HepG2 (cell line): ENCODE measurements at regions of chr5 and their contacts with region 1.

Region 1: GRCh38 chr5:139501381-139501780 is 18.8 kb upstream of the STING1 start:
- DNase-seq: no peak
- ATAC-seq: no peak
- H3K4me3 ChIP-seq: no peak overlapping the region
- H3K27ac ChIP-seq: no peak overlapping the region
- H3K4me1 ChIP-seq: peaks cover 22% of the 10 kb centered on the region
- H3K27me3 ChIP-seq: no peaks in the 10 kb centered on the region; a peak in 1 of 5 replicates
- CTCF ChIP-seq: no peak
- EP300 ChIP-seq: no peak
- POLR2A ChIP-seq: no peak
- RAD21 ChIP-seq: no peak

Region 2: GRCh38 chr5:139403787-139404483 is 97.4 kb before region 1 on chr5 and contains the start of gene SPATA24:
- CTCF ChIA-PET with region 1: no interaction called
- POLR2A ChIA-PET with region 1: interaction called, 16 read pairs
- in situ Hi-C with region 1: no loop called
- intact Hi-C with region 1: no loop called
- DNase-seq: peak; percentile 89
- ATAC-seq: peak; percentile 94
- H3K4me3 ChIP-seq: peak within 1 kb of the TSS; percentile 59 to 77 (median 60)
- H3K27ac ChIP-seq: peak within 1 kb of the TSS; percentile 78
- H3K4me1 ChIP-seq: peaks cover 52% of the 10 kb centered on the region
- H3K27me3 ChIP-seq: no peaks in the 10 kb centered on the region
- CTCF ChIP-seq: peak; percentile 18; the same call in 1 of the 2 replicates
- EP300 ChIP-seq: peak in 1 of 2 experiments; percentile 30; a peak in 1 of 4 replicates
- POLR2A ChIP-seq: peak; percentile 56 to 65
- RAD21 ChIP-seq: no peak
- total RNA-seq, gene SPATA24: 11.1 and 13.0 TPM in 2 replicates

Region 3: DNA sequence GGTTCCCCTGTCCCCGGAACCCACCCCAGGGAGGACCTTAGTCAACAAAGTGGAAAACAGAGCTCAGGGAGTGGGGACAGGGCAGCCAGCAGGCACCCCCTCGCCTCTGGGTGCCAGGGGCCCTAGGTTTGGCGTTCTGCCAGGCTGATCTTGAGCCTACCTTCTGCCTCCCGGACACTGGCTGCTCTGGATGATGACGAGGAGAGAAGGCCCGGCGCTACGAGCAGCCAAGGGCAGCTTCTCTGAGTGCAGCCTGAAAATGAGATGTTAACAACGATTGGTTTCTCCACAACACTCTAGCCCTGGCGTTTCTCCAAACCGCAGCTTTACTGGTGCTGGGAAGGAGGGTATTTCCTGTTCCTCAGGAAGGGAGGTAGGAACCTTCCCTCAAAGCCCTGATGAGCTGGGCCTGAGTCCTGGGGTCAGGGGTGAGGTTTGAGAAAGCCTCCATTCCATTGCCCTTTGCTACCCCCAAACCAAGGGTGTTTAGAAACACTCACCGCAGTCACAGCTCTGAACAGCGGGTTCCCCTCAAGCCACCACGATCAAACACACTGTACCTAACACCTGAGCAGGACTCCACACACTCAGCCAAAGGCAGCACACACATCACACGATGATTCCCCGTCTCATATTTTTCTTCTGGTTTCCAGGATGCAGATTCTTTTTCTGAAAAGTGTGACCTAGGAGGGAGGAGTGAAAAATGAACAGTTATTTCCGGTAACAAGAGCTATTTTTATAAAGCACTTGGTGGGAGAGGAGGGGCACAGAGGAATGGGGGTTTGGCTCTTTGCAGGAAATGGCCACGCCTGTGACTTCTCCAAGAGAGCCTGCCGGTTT is 19.1 kb before region 1 on chr5 and contains the start of gene STING1:
- CTCF ChIA-PET with region 1: no interaction called
- POLR2A ChIA-PET with region 1: interaction called, 24 read pairs
- in situ Hi-C with region 1: no loop called
- intact Hi-C with region 1: no loop called
- DNase-seq: peak; percentile 63
- ATAC-seq: peak; percentile 66
- H3K4me3 ChIP-seq: peak within 1 kb of the TSS; percentile 37 to 60 (median 44)
- H3K27ac ChIP-seq: no peak within 1 kb of the TSS
- H3K4me1 ChIP-seq: peaks cover 22% of the 10 kb centered on the region
- H3K27me3 ChIP-seq: peaks cover 0 to 3% of the 10 kb centered on the region in 2 experiments; a peak in 2 of 5 replicates
- CTCF ChIP-seq: no peak
- EP300 ChIP-seq: no peak
- POLR2A ChIP-seq: no peak
- RAD21 ChIP-seq: no peak
- total RNA-seq, gene STING1: 0.56 and 1.3 TPM in 2 replicates

Region 4: DNA sequence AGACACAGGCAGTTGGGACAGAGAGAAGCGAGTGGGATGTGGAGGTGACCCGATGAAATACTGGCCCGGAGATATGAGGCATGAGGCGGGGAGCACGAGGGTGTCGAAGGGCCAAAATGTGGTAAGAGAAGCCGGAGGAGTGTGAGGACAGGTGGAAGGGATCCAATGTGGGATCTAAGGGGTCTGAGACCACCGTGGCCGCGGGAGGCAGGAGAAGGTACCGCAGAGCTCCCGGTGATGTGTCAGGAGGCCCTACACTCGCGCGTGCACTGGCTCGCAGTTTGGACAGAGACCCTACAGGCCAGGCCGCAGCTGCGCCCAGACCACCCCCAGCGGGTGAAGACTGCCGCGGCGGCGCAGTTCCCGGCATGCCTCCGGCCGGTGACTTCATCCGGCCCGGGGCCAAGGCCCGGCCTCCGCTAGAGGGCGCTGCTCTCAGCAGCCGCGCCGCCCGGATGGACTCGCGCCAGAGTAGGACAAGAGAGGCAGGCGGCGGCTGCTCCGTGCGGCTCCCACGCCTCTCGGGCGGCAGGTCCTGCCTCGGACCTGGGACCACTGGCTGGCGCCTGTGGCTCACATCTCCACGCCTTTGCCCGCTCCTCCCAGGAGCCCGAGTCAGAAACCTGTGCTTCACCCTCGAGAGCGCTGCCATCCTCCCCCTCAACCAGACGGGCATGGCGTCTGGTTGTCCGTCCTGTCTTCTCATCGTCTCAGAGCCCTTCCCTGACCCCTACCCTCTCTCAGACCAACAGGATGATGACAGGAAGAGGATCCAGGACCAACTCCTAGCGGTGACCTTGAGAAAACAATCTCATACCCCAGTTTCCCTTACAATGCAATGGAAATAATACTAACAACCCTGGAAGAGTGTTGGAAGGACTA is 16.5 kb after region 1 on chr5:
- CTCF ChIA-PET with region 1: no interaction called
- POLR2A ChIA-PET with region 1: interaction called, 51 read pairs
- in situ Hi-C with region 1: no loop called
- intact Hi-C with region 1: no loop called
- DNase-seq: peak; percentile 80
- ATAC-seq: peak; percentile 91
- H3K4me3 ChIP-seq: peak overlapping the region; percentile 54 to 77 (median 59)
- H3K27ac ChIP-seq: peak overlapping the region; percentile 71
- H3K4me1 ChIP-seq: peaks cover 54% of the 10 kb centered on the region
- H3K27me3 ChIP-seq: no peaks in the 10 kb centered on the region; a peak in 1 of 5 replicates
- CTCF ChIP-seq: peak; percentile 96
- EP300 ChIP-seq: no peak
- POLR2A ChIP-seq: peak; percentile 83 to 89
- RAD21 ChIP-seq: peak; percentile 92

Region 5: GRCh38 chr5:139551191-139551889 is 50.0 kb after region 1 on chr5:
- CTCF ChIA-PET with region 1: no interaction called
- POLR2A ChIA-PET with region 1: interaction called, 12 read pairs
- in situ Hi-C with region 1: no loop called
- intact Hi-C with region 1: no loop called
- DNase-seq: no peak
- ATAC-seq: peak; percentile 33; the same call in 2 of the 3 replicates
- H3K4me3 ChIP-seq: no peak overlapping the region
- H3K27ac ChIP-seq: peak overlapping the region; percentile 1
- H3K4me1 ChIP-seq: peaks cover 36% of the 10 kb centered on the region
- H3K27me3 ChIP-seq: no peaks in the 10 kb centered on the region
- CTCF ChIP-seq: no peak
- EP300 ChIP-seq: no peak
- POLR2A ChIP-seq: no peak
- RAD21 ChIP-seq: no peak

Region 6: DNA sequence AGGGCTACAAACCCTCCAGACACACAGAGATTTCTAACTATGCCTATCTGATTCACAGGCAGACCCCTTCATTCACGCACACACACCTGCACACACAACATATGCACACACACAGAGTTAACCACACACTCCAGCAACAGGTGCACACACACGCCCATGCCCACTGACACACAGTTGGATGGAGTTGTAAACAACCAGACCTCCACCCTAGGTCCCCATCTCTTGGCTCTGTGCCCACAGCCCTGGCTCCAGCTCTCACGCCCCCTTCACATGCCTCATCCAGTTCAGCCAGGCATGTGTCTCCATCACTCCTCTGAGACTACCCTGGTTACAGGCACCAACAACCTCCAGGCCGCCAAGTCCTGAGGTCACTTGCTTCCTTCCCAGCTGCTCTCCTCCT is 355.3 kb after region 1 on chr5:
- CTCF ChIA-PET with region 1: no interaction called
- POLR2A ChIA-PET with region 1: no interaction called
- in situ Hi-C with region 1: no loop called
- intact Hi-C with region 1: no loop called
- DNase-seq: no peak
- ATAC-seq: no peak
- H3K4me3 ChIP-seq: no peak overlapping the region
- H3K27ac ChIP-seq: no peak overlapping the region
- H3K4me1 ChIP-seq: no peaks in the 10 kb centered on the region
- H3K27me3 ChIP-seq: peaks cover 4 to 67% of the 10 kb centered on the region in 2 experiments; a peak in 3 of 5 replicates
- CTCF ChIP-seq: no peak
- EP300 ChIP-seq: no peak
- POLR2A ChIP-seq: no peak
- RAD21 ChIP-seq: no peak

Region 7: GRCh38 chr5:140664359-140665119 is 1163.2 kb after region 1 on chr5 and contains the start of gene WDR55:
- CTCF ChIA-PET with region 1: no interaction called
- POLR2A ChIA-PET with region 1: no interaction called
- in situ Hi-C with region 1: no loop called
- intact Hi-C with region 1: no loop called
- DNase-seq: peak; percentile 90
- ATAC-seq: peak; percentile 99
- H3K4me3 ChIP-seq: peak within 1 kb of the TSS; percentile 75 to 100 (median 91)
- H3K27ac ChIP-seq: peak within 1 kb of the TSS; percentile 76
- H3K4me1 ChIP-seq: peaks cover 28% of the 10 kb centered on the region
- H3K27me3 ChIP-seq: no peaks in the 10 kb centered on the region; a peak in 1 of 5 replicates
- CTCF ChIP-seq: no peak; the same call in none of the 2 replicates
- EP300 ChIP-seq: peak in 1 of 2 experiments; percentile 19; a peak in 1 of 4 replicates
- POLR2A ChIP-seq: peak; percentile 81 to 97
- RAD21 ChIP-seq: peak; percentile 55
- total RNA-seq, gene WDR55: 18.2 and 18.5 TPM in 2 replicates